ENCODE measurements at regions of chr1 and their contacts with region 1.

Region 1: GRCh38 chr1:86470859-86471258 is 2.1 kb downstream of the CLCA1 start:
- DNase-seq: no peak

Region 2: GRCh38 chr1:86227026-86227425 is 243.8 kb before region 1 on chr1:
- intact Hi-C with region 1: no loop called
- DNase-seq: no peak

Region 3: GRCh38 chr1:86507935-86508582 is 37.2 kb after region 1 on chr1:
- intact Hi-C with region 1: loop called (anchors 5 kb)
- DNase-seq: no peak

Region 4: DNA sequence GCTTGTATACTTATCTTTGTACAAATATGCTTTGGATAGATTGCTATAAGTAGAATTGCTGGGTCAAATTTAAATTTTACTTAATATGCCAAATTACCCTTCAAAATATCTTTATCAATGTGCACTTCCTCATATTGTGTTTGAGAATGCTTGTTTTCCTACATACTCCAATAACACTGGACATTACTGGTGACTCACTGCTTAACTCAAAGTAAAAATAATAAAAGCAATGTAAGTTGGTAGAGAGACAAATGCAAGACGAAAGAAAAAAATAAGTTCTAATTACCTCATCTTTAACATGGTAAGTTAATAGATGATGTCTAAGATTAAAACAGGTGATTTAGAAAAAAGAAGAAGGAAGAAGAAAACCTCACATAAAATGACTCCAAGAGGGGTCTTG is 225.7 kb after region 1 on chr1:
- intact Hi-C with region 1: loop called (anchors 10 kb)
- DNase-seq: no peak

Measured in cardiac septum (tissue), 1 donor.